ENCODE measurements at regions of chr2 and their contacts with region 1.

Region 1: GRCh38 chr2:156908825-156909224 is 348.7 kb upstream of the GALNT5 start:
- DNase-seq: no peak
- H3K4me3 ChIP-seq: no peak overlapping the region
- H3K27ac ChIP-seq: peak overlapping the region; percentile 34; the same call in 1 of the 2 replicates
- H3K4me1 ChIP-seq: peaks cover 13% of the 10 kb centered on the region
- H3K27me3 ChIP-seq: no peaks in the 10 kb centered on the region
- CTCF ChIP-seq: no peak

Region 2: DNA sequence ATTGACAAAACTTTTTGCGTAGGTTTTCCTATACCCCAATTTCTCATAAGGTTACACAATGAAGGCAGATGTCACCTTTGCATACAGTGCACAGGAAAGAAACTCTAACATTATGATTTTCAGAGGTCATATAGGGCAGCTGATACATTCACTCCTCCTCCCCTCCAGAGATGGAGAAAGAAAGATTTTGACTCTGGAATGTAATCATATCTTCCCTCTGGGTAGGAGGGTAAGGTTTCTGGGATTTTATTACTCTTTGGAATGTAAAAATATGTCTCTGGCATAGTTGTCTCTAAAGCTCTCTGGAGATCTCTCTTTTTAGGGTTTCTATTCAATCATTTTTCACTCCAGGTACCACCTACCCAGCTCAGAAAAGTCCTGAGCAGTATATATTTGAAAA is 74.4 kb before region 1 on chr2:
- CTCF ChIA-PET with region 1: no interaction called
- POLR2A ChIA-PET with region 1: no interaction called
- intact Hi-C with region 1: no loop called
- DNase-seq: no peak
- H3K4me3 ChIP-seq: no peak overlapping the region
- H3K27ac ChIP-seq: no peak overlapping the region
- H3K4me1 ChIP-seq: no peaks in the 10 kb centered on the region
- H3K27me3 ChIP-seq: no peaks in the 10 kb centered on the region
- CTCF ChIP-seq: no peak

Region 3: GRCh38 chr2:156935632-156936031 is 26.8 kb after region 1 on chr2:
- CTCF ChIA-PET with region 1: no interaction called
- POLR2A ChIA-PET with region 1: interaction called, 6 read pairs
- intact Hi-C with region 1: loop called (anchors 2 kb)
- DNase-seq: peak; percentile 26 to 82
- H3K4me3 ChIP-seq: no peak overlapping the region
- H3K27ac ChIP-seq: no peak overlapping the region
- H3K4me1 ChIP-seq: 0 out of 2 replicates have a peak, but pooled peaks cover 5% of the 10 kb centered on the region
- H3K27me3 ChIP-seq: no peaks in the 10 kb centered on the region
- CTCF ChIP-seq: no peak

Region 4: DNA sequence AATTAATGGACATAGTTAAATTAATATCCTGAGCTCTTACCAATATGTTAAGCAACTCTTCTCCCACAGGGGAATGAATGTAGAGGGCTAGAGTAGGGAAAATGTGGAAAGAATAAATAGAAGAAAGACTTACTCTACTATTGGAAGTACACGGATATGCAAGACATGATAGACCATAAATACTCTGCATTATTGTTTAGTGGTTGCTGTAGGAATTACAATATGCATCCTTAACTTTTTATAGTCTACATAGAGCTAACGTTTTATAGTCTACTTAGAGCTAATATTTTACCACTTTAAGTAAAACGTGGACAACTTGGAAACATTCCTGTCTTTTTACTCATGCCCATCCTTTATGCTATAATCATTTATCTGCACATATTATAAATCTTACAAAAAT is 184.8 kb after region 1 on chr2:
- CTCF ChIA-PET with region 1: no interaction called
- POLR2A ChIA-PET with region 1: no interaction called
- intact Hi-C with region 1: no loop called
- DNase-seq: no peak
- H3K4me3 ChIP-seq: no peak overlapping the region
- H3K27ac ChIP-seq: no peak overlapping the region
- H3K4me1 ChIP-seq: no peaks in the 10 kb centered on the region
- H3K27me3 ChIP-seq: no peaks in the 10 kb centered on the region
- CTCF ChIP-seq: no peak

Measured in PC-9 (cell line).